Upper lobe of right lung (tissue), 1 donor: ENCODE measurements at regions of chr5 and their contacts with region 1.

Region 1: DNA sequence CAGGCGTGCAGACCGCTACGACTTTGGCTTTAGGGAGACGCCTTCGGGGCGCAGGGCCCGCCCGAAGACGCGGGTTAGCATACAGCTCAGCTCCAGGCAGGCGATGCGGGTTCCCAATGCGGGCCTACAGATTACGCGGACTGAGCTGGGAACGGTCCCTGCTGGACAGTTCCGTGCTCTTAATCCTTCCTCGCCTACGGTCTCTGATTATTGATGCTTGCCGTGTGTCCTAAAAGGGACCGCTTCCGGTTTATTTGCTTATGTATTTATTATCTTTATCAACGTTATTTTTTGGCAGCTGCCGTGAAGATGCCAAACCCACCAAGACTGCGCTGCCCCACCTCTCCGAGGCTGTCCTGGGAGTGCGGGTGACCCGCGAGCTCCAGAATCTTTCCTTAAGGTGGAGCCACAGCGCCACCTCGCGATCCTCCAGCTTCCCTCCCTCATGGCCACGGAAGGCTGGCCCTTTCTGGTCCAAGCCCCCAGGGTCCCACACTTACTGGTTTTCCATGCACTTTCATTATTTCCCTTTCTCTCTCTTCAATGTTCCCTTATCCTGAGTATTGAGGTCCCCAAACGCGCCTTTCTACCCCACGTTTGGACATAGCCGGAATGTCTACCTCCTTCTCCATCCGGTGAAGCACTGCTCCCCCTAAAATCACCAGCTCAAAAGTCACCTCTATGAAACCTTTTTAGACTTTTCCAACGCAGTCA is 7.0 kb upstream of the EBF1 start:
- DNase-seq: peak; percentile 87
- ATAC-seq: peak; percentile 91
- H3K4me3 ChIP-seq: peak overlapping the region; percentile 38
- H3K27ac ChIP-seq: no peak overlapping the region
- H3K4me1 ChIP-seq: peaks cover 10% of the 10 kb centered on the region
- H3K27me3 ChIP-seq: peaks cover 71% of the 10 kb centered on the region
- CTCF ChIP-seq: peak; percentile 93

Region 2: DNA sequence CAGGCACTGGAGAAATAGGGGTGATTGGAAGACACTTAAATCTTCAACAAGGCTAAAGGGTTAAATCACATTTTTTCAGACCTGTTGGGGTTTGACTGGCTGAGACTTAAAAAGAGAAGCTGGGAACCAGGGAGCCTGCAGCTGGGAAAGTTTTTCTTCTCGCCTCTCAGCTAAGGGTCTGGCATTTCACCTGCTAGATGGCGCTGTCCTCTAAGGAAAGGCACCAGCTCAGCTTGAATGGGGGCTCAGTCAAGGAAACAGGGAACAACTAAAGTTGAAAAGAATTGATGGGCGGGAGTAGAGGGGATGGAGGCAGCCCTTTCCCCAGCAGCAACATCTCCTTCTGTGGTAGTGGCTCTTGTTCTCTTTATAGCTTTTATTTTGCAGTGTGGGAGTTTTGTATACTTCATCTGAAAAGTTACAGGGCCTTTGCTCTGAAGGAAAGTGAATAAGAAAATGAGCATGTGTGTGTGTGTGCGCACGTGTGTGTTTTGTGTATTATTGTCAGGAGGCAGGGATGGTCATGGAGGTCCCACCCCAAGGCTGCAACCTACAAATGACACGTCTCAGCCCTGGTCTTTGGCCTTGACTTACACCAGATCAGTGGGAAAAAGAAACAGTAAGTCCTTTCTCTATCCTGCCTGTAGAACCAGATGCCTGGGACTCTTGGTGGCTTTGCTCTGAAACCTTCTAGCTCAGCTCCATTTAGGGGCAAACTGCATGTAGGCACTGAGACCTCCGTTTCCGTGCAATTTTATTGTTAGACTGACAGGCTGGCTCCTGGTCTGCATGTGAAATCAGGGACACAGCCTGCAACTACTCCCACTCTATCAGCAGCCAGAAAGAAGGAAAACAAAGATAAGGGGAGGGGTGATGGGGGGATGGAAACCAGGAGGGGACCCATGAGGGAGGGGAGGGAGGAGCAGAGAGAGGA is 931.5 kb before region 1 on chr5:
- intact Hi-C with region 1: loop called (anchors 10 kb)
- DNase-seq: no peak
- ATAC-seq: peak; percentile 85
- H3K4me3 ChIP-seq: no peak overlapping the region
- H3K27ac ChIP-seq: no peak overlapping the region
- H3K4me1 ChIP-seq: peaks cover 4% of the 10 kb centered on the region
- H3K27me3 ChIP-seq: peaks cover 5% of the 10 kb centered on the region
- CTCF ChIP-seq: peak; percentile 75

Region 3: DNA sequence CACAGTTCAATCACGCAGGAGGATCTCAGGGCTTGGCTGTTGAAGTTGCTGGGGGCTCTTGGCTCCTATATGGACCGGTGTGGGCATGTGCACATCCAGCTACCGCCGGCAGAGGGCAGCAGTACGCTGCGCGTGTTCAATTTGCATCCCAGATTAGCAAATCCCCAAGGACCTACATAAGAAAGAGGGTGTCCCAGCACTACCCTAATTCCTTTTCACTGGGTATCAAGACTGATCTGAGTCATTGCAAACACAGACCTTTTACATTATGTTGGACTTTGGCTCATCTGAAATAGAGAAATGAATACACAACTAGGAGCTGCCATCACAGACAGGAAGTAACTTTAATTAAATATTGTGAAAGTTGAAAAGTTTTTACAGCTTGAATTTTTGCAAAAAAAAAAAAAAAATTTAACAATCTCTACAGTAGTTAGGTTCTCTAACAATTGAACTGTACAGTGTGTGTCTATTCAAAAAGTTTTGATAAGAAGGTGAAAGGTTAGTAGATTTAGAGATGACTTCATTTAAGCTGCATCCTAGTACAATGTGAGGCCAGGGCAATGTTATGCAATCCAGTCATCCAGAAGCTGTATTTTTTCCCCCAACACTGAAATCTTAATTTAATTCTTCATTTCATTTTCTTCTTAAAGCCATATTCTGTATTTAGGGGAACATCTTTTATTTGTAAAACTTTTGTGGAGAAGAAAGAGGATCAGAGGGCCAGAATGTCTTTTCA is 411.0 kb before region 1 on chr5:
- intact Hi-C with region 1: loop called (anchors 2 kb)
- DNase-seq: peak; percentile 84
- ATAC-seq: peak; percentile 97
- H3K4me3 ChIP-seq: no peak overlapping the region
- H3K27ac ChIP-seq: no peak overlapping the region
- H3K4me1 ChIP-seq: no peaks in the 10 kb centered on the region
- H3K27me3 ChIP-seq: no peaks in the 10 kb centered on the region
- CTCF ChIP-seq: peak; percentile 98

Region 4: DNA sequence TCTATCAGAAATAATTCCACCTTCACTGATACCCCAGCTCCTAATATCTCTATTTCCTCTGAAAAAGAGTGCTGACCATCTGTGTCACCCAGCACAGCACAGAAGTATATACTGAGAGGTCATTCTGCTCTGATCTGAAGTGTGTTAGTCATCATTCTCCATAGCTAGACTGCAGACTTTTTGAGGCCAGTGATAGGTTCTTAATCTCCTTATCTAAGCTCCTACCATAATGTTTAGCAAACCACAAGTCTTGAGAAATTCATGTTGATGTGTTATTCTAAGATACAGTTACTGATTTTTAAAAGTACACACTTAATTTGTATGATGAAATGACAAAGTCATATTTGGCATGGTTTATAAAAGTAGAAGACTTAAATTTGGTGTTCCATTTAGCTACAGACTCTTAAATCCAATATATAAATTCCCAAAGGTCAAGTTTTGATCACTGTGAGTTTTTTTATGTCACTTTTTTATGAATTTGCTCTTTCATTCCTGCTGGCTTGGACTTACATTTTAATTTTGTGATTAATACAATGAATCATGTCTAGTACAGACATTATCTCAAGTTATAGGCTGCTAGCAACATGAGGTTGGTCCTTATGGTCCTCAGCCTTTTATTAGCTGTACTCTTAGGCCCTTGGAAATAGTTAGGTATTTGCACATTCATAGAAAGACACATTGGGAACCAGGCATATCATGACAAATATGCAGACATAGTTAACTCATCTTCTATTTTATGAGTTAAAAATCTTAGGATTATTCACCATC is 387.8 kb before region 1 on chr5:
- intact Hi-C with region 1: no loop called
- DNase-seq: no peak
- ATAC-seq: no peak
- H3K4me3 ChIP-seq: no peak overlapping the region
- H3K27ac ChIP-seq: no peak overlapping the region
- H3K4me1 ChIP-seq: no peaks in the 10 kb centered on the region
- H3K27me3 ChIP-seq: no peaks in the 10 kb centered on the region
- CTCF ChIP-seq: no peak

Region 5: DNA sequence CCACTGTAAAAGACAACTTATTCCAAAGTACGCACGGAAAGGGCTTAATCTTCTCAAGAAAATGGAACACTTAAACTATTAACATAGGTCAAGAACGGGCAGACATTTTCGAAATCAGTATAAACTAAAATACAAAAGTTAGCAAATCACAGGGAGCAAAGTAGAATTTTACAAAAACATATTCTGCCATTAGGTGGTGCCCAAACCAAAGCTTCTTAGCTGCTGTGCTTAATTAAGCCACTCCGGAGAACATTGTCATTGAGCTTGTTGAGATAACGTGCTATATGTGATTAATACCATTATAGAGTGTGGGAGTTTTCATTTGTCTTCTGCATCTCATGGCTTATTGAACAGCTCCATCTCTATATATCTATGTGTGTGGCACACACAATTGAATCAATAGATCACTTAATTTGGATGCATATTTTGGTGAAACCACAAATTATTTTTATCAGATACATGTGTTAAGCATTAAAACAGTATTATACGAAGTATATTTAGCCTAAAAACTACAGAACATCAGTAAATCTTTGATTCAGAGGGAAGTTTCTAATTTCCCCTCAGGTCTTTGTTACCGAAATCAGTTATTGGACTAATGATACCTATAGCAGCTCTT is 179.8 kb after region 1 on chr5:
- intact Hi-C with region 1: no loop called
- DNase-seq: no peak
- ATAC-seq: peak; percentile 71
- H3K4me3 ChIP-seq: no peak overlapping the region
- H3K27ac ChIP-seq: no peak overlapping the region
- H3K4me1 ChIP-seq: no peaks in the 10 kb centered on the region
- H3K27me3 ChIP-seq: no peaks in the 10 kb centered on the region
- CTCF ChIP-seq: peak; percentile 56